ENCODE measurements at regions of chr6 and their contacts with region 1.

Region 1: GRCh38 chr6:35391240-35391968 is 49.0 kb downstream of the PPARD start:
- DNase-seq: no peak
- ATAC-seq: peak; percentile 37
- H3K4me3 Mint-ChIP-seq: no peak overlapping the region
- H3K27ac Mint-ChIP-seq: no peak overlapping the region
- H3K4me1 Mint-ChIP-seq: peaks cover 52% of the 10 kb centered on the region
- H3K27me3 Mint-ChIP-seq: no peaks in the 10 kb centered on the region

Region 2: GRCh38 chr6:35370124-35370741 is 21.2 kb before region 1 on chr6:
- CTCF ChIA-PET with region 1: no interaction called
- POLR2A ChIA-PET with region 1: no interaction called
- intact Hi-C with region 1: loop called in 1 of 2 experiments (anchors 2 kb)
- DNase-seq: peak; percentile 59
- ATAC-seq: peak; percentile 62
- H3K4me3 Mint-ChIP-seq: peak overlapping the region; percentile 41
- H3K27ac Mint-ChIP-seq: peak overlapping the region; percentile 96
- H3K4me1 Mint-ChIP-seq: peaks cover 63% of the 10 kb centered on the region
- H3K27me3 Mint-ChIP-seq: no peaks in the 10 kb centered on the region

Region 3: GRCh38 chr6:35583893-35584688 is 192.7 kb after region 1 on chr6:
- CTCF ChIA-PET with region 1: no interaction called
- POLR2A ChIA-PET with region 1: no interaction called
- intact Hi-C with region 1: no loop called
- DNase-seq: peak; percentile 86
- ATAC-seq: peak; percentile 73
- H3K4me3 Mint-ChIP-seq: no peak overlapping the region
- H3K27ac Mint-ChIP-seq: no peak overlapping the region
- H3K4me1 Mint-ChIP-seq: peaks cover 61% of the 10 kb centered on the region
- H3K27me3 Mint-ChIP-seq: no peaks in the 10 kb centered on the region

Region 4: GRCh38 chr6:35797837-35798526 is 406.6 kb after region 1 on chr6:
- CTCF ChIA-PET with region 1: no interaction called
- POLR2A ChIA-PET with region 1: no interaction called
- intact Hi-C with region 1: no loop called
- DNase-seq: no peak
- ATAC-seq: no peak
- H3K4me3 Mint-ChIP-seq: no peak overlapping the region
- H3K27ac Mint-ChIP-seq: no peak overlapping the region
- H3K4me1 Mint-ChIP-seq: no peaks in the 10 kb centered on the region
- H3K27me3 Mint-ChIP-seq: peaks cover 3% of the 10 kb centered on the region

Measured in activated CD4-positive, alpha-beta T cell treated with anti-CD3 and anti-CD28 coated beads for 36 hours (primary cell).